Posterior vena cava (tissue), 2 donors: ENCODE measurements at regions of chrX and their contacts with region 1.

Region 1: GRCh38 chrX:112211459-112211858 is 128.9 kb upstream of the TRPC5 start:
- DNase-seq: no peak

Region 2: GRCh38 chrX:110964786-110965185 is 1246.7 kb before region 1 on chrX:
- intact Hi-C with region 1: no loop called
- DNase-seq: no peak

Region 3: GRCh38 chrX:112179361-112179760 is 32.1 kb before region 1 on chrX:
- intact Hi-C with region 1: loop called in 1 of 2 experiments (anchors 1 kb)
- DNase-seq: no peak